Activated T-helper 1 cell treated with anti-CD3 and anti-CD28 coated beads, Interleukin-12 subunit alpha, Interleukin-12 subunit beta, Interleukin-2, Interleukin-4 antibody, amounts not matched to agents 30 ng/mL and 10 ng/mL and 1 ng/mL, durations not matched to agents 14 hours and 24 hours and 36 hours (primary cell): ENCODE measurements at regions of chr4 and their contacts with region 1.

Region 1: DNA sequence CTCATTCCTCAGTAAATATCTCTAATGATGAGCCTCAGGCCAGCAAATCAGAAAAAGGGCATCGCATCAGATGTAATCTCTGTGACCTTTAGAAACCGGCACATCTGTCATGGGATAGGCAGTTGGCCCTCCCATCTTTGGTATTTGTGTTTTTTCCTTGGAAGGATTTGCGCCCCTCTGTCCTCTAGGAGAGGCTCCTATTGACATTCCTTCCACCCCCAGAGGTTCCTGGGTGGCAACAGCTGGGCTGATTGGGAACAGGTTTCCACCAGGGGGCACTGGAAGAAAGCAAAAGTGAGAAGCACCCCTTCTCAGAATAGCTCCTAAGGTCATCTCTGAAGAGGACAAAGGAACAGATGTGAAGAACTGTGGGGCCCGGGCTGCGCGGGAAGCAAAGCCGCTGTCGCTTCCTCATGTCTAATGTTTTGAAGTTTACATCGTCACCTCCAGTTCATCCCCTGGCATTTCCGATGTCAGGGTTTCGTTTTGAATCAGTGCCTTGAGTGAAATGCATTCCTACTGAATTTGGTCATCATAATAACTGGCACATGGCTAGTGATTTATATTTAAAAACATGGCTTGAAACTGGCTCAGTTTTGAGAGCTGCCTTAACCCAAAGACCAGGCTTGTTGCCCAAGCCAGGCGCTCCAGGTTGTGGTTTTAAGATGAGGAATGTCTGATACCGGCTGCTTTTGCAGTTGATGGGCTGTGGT is 6.2 kb downstream of the TXK start:
- DNase-seq: peak; percentile 74
- H3K4me3 Mint-ChIP-seq: peak overlapping the region; percentile 66
- H3K27ac Mint-ChIP-seq: peak overlapping the region; percentile 97
- H3K4me1 Mint-ChIP-seq: peaks cover 84% of the 10 kb centered on the region
- H3K27me3 Mint-ChIP-seq: no peaks in the 10 kb centered on the region

Region 2: DNA sequence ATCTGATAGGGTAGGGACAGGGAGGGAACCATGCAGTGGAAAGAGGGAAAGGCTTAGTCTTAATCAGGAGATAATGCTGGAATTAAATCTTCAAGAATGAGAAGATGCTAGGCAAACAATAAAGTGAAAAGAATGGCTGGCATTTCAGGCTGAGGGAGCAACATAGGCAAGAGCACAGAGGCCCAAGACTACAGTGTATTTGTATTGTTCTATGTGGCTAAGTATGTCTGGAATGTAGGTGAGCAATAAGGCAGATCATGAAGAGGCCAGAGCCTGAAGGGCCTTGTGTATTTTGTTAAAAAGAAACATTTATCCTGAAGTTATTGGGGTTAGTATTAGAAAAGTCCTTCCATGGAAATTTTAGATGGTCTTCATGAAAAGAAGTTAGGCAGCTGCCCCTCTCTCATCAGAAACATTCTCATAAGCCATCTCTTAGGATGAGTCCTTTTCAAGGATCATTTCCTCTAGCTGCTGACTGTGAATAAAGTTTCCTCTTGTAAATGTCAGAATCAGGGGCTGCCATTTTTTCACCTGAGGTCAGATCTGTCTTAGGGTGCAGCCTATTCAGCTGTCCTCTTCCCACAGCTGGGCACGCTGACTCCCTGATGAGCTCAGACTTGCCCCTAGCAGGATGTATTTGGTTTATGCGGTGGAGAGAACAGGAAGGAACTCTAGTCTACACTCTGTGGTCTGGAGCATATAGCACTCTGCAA is 596.4 kb before region 1 on chr4:
- intact Hi-C with region 1: loop called (anchors 5 kb)
- DNase-seq: peak; percentile 70
- H3K4me3 Mint-ChIP-seq: peak overlapping the region; percentile 0
- H3K27ac Mint-ChIP-seq: peak overlapping the region; percentile 21
- H3K4me1 Mint-ChIP-seq: peaks cover 48% of the 10 kb centered on the region
- H3K27me3 Mint-ChIP-seq: no peaks in the 10 kb centered on the region

Region 3: DNA sequence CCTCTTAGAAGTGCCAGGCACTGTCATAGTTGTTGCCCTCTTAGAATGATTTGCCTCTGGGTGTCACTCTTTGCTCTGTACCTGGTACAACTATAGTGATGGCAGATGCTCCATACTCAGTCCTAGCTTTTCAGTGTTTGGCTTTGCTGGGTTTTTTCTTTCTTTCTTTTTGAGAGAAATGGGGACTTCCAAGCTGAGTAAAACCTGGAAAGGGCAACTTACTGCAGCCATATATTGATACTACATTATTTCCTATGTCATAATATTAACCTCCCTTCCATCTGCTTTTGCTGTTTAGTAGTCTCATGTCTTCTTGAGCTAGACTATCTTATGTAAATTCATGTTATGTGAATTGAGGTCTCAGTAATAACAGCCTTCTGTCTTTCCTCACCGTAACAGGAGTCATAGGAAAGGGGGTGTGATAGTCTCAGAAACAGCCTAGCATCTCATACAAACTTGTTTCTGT is 62.2 kb before region 1 on chr4:
- intact Hi-C with region 1: loop called (anchors 1 kb)
- DNase-seq: no peak
- H3K4me3 Mint-ChIP-seq: no peak overlapping the region
- H3K27ac Mint-ChIP-seq: no peak overlapping the region
- H3K4me1 Mint-ChIP-seq: no peaks in the 10 kb centered on the region
- H3K27me3 Mint-ChIP-seq: peaks cover 2% of the 10 kb centered on the region

Region 4: DNA sequence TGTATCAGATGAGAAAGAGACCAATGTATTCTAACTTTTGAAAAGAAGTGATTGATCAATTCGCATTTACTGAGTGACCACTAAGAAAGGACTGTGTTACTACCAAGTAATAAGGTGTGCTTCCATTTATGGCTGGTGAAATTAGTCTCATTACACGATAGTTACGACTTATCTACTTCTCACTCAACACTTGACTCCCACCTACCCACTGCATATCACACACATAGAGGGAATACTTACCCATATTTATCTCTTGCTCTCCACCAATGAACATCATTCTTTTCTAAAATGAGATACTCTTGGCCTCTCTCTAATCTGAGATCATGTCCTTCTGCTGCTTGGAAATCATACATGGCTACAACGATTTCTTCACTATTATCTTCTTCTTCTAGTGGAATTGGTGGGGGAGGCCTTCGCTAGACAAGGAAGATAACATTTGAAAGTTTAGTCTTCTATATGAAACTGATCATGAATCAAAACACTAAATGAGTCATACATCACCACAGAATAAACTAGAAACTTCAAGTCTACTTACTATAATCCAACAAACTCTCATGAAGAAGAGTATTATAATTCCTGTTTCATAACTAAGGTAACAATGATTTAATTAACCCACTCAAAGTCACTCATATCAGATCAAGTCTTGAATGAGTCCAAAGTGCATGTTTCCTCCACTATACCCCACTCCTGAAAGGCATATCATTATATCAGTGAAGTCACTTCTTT is 39.9 kb after region 1 on chr4:
- intact Hi-C with region 1: loop called (anchors 1 kb)
- DNase-seq: no peak
- H3K4me3 Mint-ChIP-seq: no peak overlapping the region
- H3K27ac Mint-ChIP-seq: no peak overlapping the region
- H3K4me1 Mint-ChIP-seq: peaks cover 6% of the 10 kb centered on the region
- H3K27me3 Mint-ChIP-seq: no peaks in the 10 kb centered on the region

Region 5: GRCh38 chr4:48546336-48546735 is 418.5 kb after region 1 on chr4:
- intact Hi-C with region 1: loop called (anchors 5 kb)
- DNase-seq: no peak
- H3K4me3 Mint-ChIP-seq: no peak overlapping the region
- H3K27ac Mint-ChIP-seq: no peak overlapping the region
- H3K4me1 Mint-ChIP-seq: peaks cover 5% of the 10 kb centered on the region
- H3K27me3 Mint-ChIP-seq: no peaks in the 10 kb centered on the region

Region 6: GRCh38 chr4:48963042-48963679 is 835.3 kb after region 1 on chr4:
- intact Hi-C with region 1: loop called (anchors 5 kb)
- DNase-seq: peak; percentile 54
- H3K4me3 Mint-ChIP-seq: no peak overlapping the region
- H3K27ac Mint-ChIP-seq: no peak overlapping the region
- H3K4me1 Mint-ChIP-seq: no peaks in the 10 kb centered on the region
- H3K27me3 Mint-ChIP-seq: peaks cover 4% of the 10 kb centered on the region

Region 7: DNA sequence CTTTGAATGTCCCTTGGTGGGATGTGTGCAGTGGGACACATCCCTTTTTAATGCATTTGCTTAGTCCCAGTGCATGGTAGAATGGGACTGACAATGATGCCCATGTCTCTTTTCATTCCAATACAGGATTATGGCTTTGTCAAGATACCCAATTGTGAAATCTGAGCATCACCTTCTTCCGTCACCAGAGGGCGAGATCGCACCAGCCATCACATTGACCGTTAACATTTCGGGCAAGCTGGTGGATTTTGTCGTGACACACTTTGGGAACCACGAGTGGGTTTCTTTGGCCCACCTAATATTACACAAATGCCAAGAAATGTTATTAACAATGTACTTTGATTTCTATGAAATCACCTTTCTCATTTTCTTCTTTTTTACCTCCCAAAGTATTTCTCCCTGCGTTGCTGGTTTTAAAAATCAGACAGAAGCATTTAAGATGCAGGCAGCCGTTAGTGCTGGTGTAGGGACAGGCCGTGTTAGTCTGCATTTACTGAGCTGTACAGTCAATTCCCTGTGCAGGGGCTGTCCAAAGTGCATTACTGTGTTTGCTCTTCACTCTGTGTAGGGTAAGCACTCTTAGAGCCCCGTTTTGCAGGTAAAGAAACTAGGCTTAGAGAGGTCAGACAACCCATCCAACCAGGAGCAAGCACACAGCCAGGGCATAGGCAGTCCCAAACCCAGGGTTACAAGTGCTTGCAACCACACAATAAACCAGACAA is 904.8 kb after region 1 on chr4:
- intact Hi-C with region 1: no loop called
- DNase-seq: no peak
- H3K4me3 Mint-ChIP-seq: no peak overlapping the region
- H3K27ac Mint-ChIP-seq: no peak overlapping the region
- H3K4me1 Mint-ChIP-seq: no peaks in the 10 kb centered on the region
- H3K27me3 Mint-ChIP-seq: peaks cover 4% of the 10 kb centered on the region